ENCODE measurements at regions of chr1 and their contacts with region 1.

Region 1: GRCh38 chr1:86499987-86500593 is 31.4 kb downstream of the CLCA1 start:
- DNase-seq: no peak
- H3K4me3 ChIP-seq: no peak overlapping the region
- H3K27me3 ChIP-seq: peaks cover 3% of the 10 kb centered on the region
- CTCF ChIP-seq: peak; percentile 61

Region 2: GRCh38 chr1:86352096-86352495 is 148.0 kb before region 1 on chr1:
- CTCF ChIA-PET with region 1: no interaction called
- POLR2A ChIA-PET with region 1: no interaction called
- DNase-seq: no peak
- H3K4me3 ChIP-seq: no peak overlapping the region
- H3K27me3 ChIP-seq: no peaks in the 10 kb centered on the region
- CTCF ChIP-seq: no peak

Region 3: DNA sequence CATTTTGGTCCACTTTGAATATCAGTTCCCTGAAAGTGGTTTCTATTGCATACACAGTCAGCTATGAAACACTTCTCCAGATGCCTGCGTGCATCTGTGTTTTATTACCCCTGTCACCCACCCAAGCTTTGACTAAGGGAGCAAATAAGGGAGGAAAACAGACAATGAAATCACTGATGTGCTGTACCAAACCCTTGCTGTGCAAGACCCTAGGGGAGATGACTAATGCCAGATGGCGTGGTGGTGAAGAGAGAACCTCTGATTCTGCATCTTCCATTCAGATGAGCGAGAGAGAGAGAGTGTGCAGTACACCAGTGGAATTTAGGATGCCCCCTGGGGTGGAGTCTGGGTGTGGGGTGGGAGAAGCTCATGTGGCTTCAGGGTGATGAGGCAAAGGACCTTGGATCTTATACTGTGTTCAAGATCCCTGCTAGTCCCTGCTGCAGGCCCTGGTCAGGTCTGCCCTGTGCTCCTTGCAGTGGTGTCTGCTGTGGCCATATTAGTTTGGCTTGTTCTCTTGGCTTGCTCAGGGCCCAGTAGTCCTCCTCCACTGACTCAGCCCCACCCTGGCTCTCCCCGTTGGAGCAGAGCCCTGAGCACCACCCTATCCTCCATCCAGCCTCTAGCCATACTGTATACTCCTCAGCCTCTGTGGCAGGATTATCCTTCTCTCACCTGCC is 12.8 kb before region 1 on chr1:
- CTCF ChIA-PET with region 1: interaction called, 60 read pairs
- POLR2A ChIA-PET with region 1: interaction called, 4 read pairs
- DNase-seq: peak; percentile 99
- H3K4me3 ChIP-seq: no peak overlapping the region
- H3K27me3 ChIP-seq: no peaks in the 10 kb centered on the region
- CTCF ChIP-seq: no peak

Region 4: GRCh38 chr1:86687595-86687994 is 187.5 kb after region 1 on chr1:
- CTCF ChIA-PET with region 1: no interaction called
- POLR2A ChIA-PET with region 1: no interaction called
- DNase-seq: no peak
- H3K4me3 ChIP-seq: no peak overlapping the region
- H3K27me3 ChIP-seq: no peaks in the 10 kb centered on the region; the same call in 1 of the 2 replicates
- CTCF ChIP-seq: no peak

Measured in BJ (cell line).